ENCODE measurements at regions of chr1 and their contacts with region 1.

Region 1: GRCh38 chr1:158506369-158506987 is 34.5 kb downstream of the OR10R2 start:
- DNase-seq: peak; percentile 82
- ATAC-seq: peak; percentile 98
- H3K4me3 Mint-ChIP-seq: no peak overlapping the region
- H3K27ac Mint-ChIP-seq: no peak overlapping the region
- H3K4me1 Mint-ChIP-seq: peaks cover 16% of the 10 kb centered on the region
- H3K27me3 Mint-ChIP-seq: no peaks in the 10 kb centered on the region; the same call in 1 of the 2 replicates
- CTCF ChIP-seq: peak; percentile 74

Region 2: DNA sequence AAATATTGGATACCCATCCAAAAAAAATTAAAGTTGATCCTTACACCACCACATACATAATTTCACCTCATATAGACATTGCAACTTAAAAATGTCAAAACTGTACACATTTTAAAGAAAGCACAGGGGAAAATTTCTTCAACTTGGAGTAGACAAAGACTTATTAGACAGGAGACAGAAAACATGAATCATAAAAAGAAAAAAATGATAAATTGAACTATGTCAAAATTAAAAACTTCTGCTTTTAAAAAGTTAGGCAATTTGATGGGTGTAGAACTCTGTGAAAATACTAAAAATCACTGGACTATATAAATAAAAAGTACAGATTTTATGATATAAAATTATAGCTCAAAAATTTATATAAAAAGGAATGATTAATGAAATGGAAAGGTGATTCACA is 49.2 kb before region 1 on chr1:
- CTCF ChIA-PET with region 1: no interaction called
- POLR2A ChIA-PET with region 1: no interaction called
- DNase-seq: no peak
- ATAC-seq: no peak
- H3K4me3 Mint-ChIP-seq: no peak overlapping the region
- H3K27ac Mint-ChIP-seq: no peak overlapping the region
- H3K4me1 Mint-ChIP-seq: peaks cover 20% of the 10 kb centered on the region
- H3K27me3 Mint-ChIP-seq: no peaks in the 10 kb centered on the region
- CTCF ChIP-seq: no peak

Region 3: DNA sequence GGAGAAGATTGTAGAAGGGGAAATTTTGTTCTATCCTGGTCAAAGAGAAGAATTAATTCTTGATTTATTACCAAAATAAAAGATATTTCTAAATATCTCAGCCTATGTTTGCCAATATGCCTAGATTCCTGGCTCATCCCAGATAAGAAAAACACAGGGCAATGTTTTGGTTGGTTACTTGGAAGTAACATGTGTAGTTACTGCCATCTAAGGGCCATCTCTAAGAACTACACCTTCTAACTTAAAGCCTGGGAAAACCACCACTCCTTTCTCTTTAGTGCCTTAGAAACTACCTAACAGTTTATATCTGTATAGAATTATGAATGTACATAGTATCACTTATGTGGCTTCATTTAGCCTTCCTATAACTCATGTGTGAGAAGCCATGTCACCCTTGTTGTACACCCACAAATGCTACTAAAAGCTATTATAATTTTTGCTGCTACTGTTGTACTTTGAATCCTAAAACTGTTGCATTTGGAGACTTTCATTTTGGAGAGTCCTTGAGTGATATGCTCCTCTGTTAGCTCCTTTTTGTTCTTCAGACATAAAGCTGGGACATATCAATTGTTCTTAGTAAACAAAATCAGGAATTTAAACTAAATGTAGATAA is 565.6 kb after region 1 on chr1:
- CTCF ChIA-PET with region 1: interaction called, 18 read pairs
- POLR2A ChIA-PET with region 1: no interaction called
- DNase-seq: no peak
- ATAC-seq: peak; percentile 74
- H3K4me3 Mint-ChIP-seq: no peak overlapping the region
- H3K27ac Mint-ChIP-seq: peak overlapping the region; percentile 38; the same call in 1 of the 2 replicates
- H3K4me1 Mint-ChIP-seq: peaks cover 12% of the 10 kb centered on the region
- H3K27me3 Mint-ChIP-seq: no peaks in the 10 kb centered on the region
- CTCF ChIP-seq: peak; percentile 66